ENCODE measurements at regions of chr3 and their contacts with region 1.

Region 1: DNA sequence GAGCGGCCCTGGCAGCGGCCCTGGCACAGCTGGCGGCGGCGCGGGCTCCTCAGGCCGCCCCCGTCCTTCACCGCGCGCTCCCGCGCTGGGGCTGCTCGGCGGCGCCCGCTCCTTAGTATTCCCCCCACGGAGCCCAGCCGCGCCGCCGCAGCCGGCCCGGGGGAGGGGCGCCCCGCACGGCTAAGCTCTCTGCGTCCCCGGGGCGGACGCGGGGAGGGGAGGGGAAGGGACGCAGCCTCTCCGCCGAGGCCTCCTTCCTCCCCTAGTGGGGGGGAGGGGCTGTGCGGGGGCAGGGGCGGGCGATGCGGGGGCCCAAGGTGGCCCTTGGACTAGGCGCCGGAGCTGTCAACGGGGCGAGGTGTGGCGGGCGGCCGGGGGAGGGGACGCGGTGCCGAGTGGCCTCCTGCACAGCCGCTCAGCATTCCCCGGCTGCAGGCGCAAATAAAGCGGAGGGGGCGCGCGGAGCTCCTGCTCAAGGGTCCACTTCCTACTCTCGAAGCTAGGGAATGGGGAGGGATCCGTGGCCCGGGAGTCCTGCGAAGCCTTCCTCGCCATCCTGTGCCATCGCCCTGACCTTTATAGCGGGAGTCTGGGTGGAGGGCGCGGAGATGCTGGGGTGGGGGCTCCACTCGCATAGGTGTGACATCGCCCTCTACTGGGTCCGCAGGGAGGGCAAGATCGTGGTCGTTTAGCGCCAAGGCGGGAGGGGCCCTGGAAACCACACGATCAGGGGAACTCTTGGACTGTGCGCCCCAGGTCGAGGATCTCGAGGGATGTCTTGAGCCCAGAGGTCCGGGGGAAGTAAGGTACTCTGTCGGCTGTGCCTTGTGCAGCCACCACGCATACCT is 22.2 kb downstream of the EPHB3 start:
- DNase-seq: no peak
- H3K4me3 ChIP-seq: peak overlapping the region; percentile 62 to 87
- H3K27ac ChIP-seq: peak overlapping the region; percentile 66 to 80
- H3K4me1 ChIP-seq: peaks cover 0 to 7% of the 10 kb centered on the region in 2 donors
- H3K27me3 ChIP-seq: no peaks in the 10 kb centered on the region
- CTCF ChIP-seq: peak in 1 of 3 experiments; percentile 19

Region 2: DNA sequence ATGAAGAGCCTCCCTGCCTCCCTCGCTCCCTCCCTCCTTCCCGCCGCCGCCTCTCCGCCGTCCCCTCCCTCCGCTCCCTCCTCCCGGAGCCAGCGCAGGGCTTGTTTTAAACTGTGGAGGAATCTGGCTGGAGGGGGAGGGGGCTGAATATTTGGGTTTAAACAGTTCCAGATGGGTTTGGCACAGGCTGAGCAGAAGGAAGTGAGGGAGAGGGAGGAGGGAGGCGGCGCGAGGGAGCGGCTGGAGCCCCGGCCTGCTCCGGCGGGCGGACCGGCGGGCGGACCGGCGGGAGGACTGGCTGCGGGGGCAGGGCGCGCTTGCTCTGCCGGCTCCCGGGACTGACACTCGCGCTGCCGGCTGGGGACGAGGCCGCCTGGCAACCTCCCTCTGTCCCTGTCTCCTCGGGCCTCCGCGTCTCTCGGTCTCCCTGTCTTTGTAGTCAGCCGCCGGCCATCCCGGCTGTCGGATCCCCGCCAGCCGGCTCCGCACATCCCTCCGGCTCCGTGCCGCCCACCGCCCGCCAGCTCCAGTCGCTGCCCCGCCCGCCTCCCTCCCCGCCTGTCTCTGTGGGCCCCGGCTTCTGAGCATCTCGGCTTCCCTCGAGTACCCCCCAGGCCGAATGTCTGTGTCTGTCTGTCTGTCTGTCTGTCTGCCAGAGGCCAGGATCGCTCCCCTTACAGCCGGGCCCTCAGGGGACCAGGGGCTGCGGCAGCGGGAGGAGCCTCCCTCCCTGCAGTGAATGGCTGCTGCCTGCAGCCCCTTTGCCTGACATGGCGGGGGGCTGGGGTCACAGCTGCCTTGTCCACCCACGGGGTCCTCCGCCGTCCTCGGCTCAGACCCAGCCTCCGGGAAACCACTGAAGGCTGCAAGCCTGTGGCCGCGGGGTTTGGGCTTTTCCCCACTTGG is 14.6 kb before region 1 on chr3:
- intact Hi-C with region 1: loop called (anchors 2 kb)
- DNase-seq: peak in 1 of 2 donors; percentile 88
- H3K4me3 ChIP-seq: peak overlapping the region; percentile 44 to 77
- H3K27ac ChIP-seq: peak overlapping the region; percentile 58 to 70
- H3K4me1 ChIP-seq: peaks cover 0 to 10% of the 10 kb centered on the region in 2 donors
- H3K27me3 ChIP-seq: no peaks in the 10 kb centered on the region
- CTCF ChIP-seq: no peak

Region 3: GRCh38 chr3:184601576-184602415 is 18.0 kb after region 1 on chr3:
- intact Hi-C with region 1: loop called (anchors 2 kb)
- DNase-seq: no peak
- H3K4me3 ChIP-seq: peak overlapping the region; percentile 26 to 65
- H3K27ac ChIP-seq: peak overlapping the region in 1 of 2 donors; percentile 39
- H3K4me1 ChIP-seq: peaks cover 5 to 26% of the 10 kb centered on the region in 2 donors
- H3K27me3 ChIP-seq: no peaks in the 10 kb centered on the region
- CTCF ChIP-seq: no peak

Region 4: DNA sequence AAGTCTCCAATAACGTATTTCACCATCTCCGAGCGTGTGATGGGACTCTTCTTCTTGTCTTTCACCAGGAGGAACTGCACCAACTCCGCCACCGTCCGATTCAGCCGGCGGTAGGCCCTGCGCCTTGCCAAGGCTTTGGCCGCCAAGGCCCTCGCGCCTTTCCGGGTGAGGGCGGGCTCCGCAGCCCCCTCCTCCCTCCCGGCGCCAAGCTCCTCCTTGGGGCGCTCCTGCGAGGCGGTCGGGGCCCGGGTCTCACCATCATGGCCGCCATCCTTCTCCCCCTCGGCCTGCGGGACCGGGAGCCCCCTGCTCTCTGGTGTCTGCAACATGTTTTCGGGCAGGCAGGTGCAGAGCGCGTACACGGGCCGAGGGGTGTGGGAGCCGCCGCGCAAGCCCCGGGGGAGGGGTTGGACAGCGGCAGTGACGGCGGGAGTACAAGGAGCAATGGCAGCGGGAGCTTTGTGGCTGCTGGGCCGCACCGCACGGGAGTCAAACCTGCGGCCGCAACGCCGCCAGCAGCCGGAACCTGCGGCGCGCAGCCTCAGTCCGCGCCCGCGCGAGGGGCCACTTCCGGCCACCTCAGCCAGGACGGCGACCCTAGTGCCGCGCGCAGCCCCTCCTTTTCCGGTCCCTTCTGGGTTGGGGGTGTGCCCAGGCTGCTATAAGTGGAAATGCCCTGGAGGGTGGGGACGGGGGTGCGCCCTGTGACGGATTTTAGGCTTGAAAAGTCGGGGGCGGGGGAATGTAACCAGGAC is 127.9 kb after region 1 on chr3 and contains the start of gene MAGEF1:
- intact Hi-C with region 1: loop called (anchors 5 kb)
- DNase-seq: peak; percentile 15 to 91
- H3K4me3 ChIP-seq: peak within 1 kb of the TSS; percentile 94 to 96
- H3K27ac ChIP-seq: peak within 1 kb of the TSS; percentile 92 to 96
- H3K4me1 ChIP-seq: peaks cover 3 to 11% of the 10 kb centered on the region in 2 donors
- H3K27me3 ChIP-seq: no peaks in the 10 kb centered on the region
- CTCF ChIP-seq: no peak
- total RNA-seq, gene MAGEF1: 5.2 TPM